ENCODE measurements at regions of chr22 and their contacts with region 1.

Region 1: GRCh38 chr22:46563381-46564083 is 26.1 kb upstream of the CELSR1 start:
- DNase-seq: peak; percentile 75 to 80
- H3K4me3 ChIP-seq: no peak overlapping the region
- H3K4me3 Mint-ChIP-seq: no peak overlapping the region
- H3K27ac Mint-ChIP-seq: peak overlapping the region; percentile 81
- H3K4me1 ChIP-seq: peaks cover 12% of the 10 kb centered on the region
- H3K4me1 Mint-ChIP-seq: no peaks in the 10 kb centered on the region
- H3K27me3 ChIP-seq: no peaks in the 10 kb centered on the region
- H3K27me3 Mint-ChIP-seq: no peaks in the 10 kb centered on the region
- CTCF ChIP-seq: peak; percentile 67 to 78

Region 2: GRCh38 chr22:46547883-46548244 is 15.7 kb before region 1 on chr22:
- CTCF ChIA-PET with region 1: interaction called, 14 read pairs
- POLR2A ChIA-PET with region 1: no interaction called
- intact Hi-C with region 1: no loop called
- DNase-seq: peak in 1 of 2 experiments; percentile 39
- H3K4me3 ChIP-seq: no peak overlapping the region
- H3K4me3 Mint-ChIP-seq: no peak overlapping the region
- H3K27ac Mint-ChIP-seq: no peak overlapping the region
- H3K4me1 ChIP-seq: peaks cover 6% of the 10 kb centered on the region; the same call in 1 of the 2 replicates
- H3K4me1 Mint-ChIP-seq: no peaks in the 10 kb centered on the region
- H3K27me3 ChIP-seq: no peaks in the 10 kb centered on the region; the same call in 1 of the 2 replicates
- H3K27me3 Mint-ChIP-seq: no peaks in the 10 kb centered on the region
- CTCF ChIP-seq: no peak

Region 3: GRCh38 chr22:46576556-46577367 is 13.2 kb after region 1 on chr22:
- CTCF ChIA-PET with region 1: interaction called, 13 read pairs
- POLR2A ChIA-PET with region 1: no interaction called
- intact Hi-C with region 1: no loop called
- DNase-seq: peak in 1 of 2 experiments; percentile 70
- H3K4me3 ChIP-seq: peak overlapping the region; percentile 72
- H3K4me3 Mint-ChIP-seq: peak overlapping the region; percentile 56
- H3K27ac Mint-ChIP-seq: peak overlapping the region; percentile 88
- H3K4me1 ChIP-seq: peaks cover 45% of the 10 kb centered on the region
- H3K4me1 Mint-ChIP-seq: peaks cover 26% of the 10 kb centered on the region
- H3K27me3 ChIP-seq: no peaks in the 10 kb centered on the region
- H3K27me3 Mint-ChIP-seq: no peaks in the 10 kb centered on the region
- CTCF ChIP-seq: no peak

Region 4: DNA sequence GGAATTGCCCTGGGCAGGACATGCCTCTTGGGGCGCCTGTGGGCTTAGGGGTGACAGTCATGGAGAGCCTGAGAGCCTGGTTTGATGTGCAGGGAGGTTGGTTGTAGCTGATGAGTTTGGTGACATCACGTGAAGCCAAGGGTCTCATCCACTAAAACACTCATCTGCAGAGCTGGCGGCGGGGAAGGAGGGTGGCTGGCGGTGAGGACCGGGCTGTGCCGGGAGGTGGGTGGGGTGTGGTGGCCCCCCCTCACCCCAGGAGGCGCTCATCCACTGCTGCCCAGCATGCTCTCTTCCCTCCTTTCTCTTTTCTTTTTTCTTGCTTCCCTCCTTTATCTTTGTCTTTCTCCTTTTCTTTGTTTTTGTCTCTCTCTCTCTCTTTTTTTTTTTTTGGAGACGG is 105.7 kb after region 1 on chr22:
- CTCF ChIA-PET with region 1: interaction called, 11 read pairs
- POLR2A ChIA-PET with region 1: no interaction called
- intact Hi-C with region 1: loop called (anchors 1 kb)
- DNase-seq: no peak
- H3K4me3 ChIP-seq: no peak overlapping the region
- H3K4me3 Mint-ChIP-seq: no peak overlapping the region
- H3K27ac Mint-ChIP-seq: no peak overlapping the region
- H3K4me1 ChIP-seq: peaks cover 6% of the 10 kb centered on the region
- H3K4me1 Mint-ChIP-seq: no peaks in the 10 kb centered on the region
- H3K27me3 ChIP-seq: no peaks in the 10 kb centered on the region
- H3K27me3 Mint-ChIP-seq: no peaks in the 10 kb centered on the region
- CTCF ChIP-seq: no peak

Region 5: GRCh38 chr22:46674367-46674781 is 110.8 kb after region 1 on chr22:
- CTCF ChIA-PET with region 1: interaction called, 11 read pairs
- POLR2A ChIA-PET with region 1: no interaction called
- intact Hi-C with region 1: loop called (anchors 1 kb)
- DNase-seq: no peak
- H3K4me3 ChIP-seq: no peak overlapping the region
- H3K4me3 Mint-ChIP-seq: no peak overlapping the region
- H3K27ac Mint-ChIP-seq: no peak overlapping the region
- H3K4me1 ChIP-seq: peaks cover 6% of the 10 kb centered on the region
- H3K4me1 Mint-ChIP-seq: no peaks in the 10 kb centered on the region
- H3K27me3 ChIP-seq: no peaks in the 10 kb centered on the region
- H3K27me3 Mint-ChIP-seq: no peaks in the 10 kb centered on the region
- CTCF ChIP-seq: no peak

Region 6: DNA sequence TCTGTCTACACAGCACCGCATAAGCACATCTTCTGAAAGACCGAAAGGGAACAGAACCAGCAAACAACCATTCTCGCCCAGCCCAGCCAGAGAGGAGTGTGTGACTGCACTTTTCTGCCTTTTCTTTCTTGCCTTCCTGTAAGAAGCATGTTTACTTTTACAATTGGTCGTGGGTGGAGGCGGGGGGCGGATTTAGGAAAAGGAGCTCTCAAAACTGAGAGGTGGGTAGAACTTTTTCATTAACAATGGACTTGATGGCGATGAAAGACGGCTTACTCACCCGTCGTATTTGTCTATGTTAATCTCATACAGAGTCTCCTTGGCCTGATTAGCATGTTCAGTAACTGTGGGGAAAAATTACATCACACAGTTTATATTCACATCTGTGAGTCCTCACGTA is 147.3 kb after region 1 on chr22:
- CTCF ChIA-PET with region 1: no interaction called
- POLR2A ChIA-PET with region 1: no interaction called
- intact Hi-C with region 1: no loop called
- DNase-seq: no peak
- H3K4me3 ChIP-seq: no peak overlapping the region
- H3K4me3 Mint-ChIP-seq: no peak overlapping the region
- H3K27ac Mint-ChIP-seq: no peak overlapping the region
- H3K4me1 ChIP-seq: no peaks in the 10 kb centered on the region
- H3K4me1 Mint-ChIP-seq: no peaks in the 10 kb centered on the region
- H3K27me3 ChIP-seq: no peaks in the 10 kb centered on the region
- H3K27me3 Mint-ChIP-seq: no peaks in the 10 kb centered on the region
- CTCF ChIP-seq: no peak